ENCODE measurements at regions of chr17 and their contacts with region 1.

Region 1: GRCh38 chr17:56977673-56978395 is at the start of gene SCPEP1:
- DNase-seq: peak; percentile 100
- H3K4me3 ChIP-seq: peak within 1 kb of the TSS; percentile 70 to 75
- H3K27ac ChIP-seq: peak within 1 kb of the TSS in 1 of 2 experiments; percentile 70; a peak in 2 of 4 replicates
- H3K4me1 ChIP-seq: peaks cover 5 to 12% of the 10 kb centered on the region in 2 experiments; a peak in 3 of 4 replicates
- H3K27me3 ChIP-seq: no peaks in the 10 kb centered on the region
- CTCF ChIP-seq: no peak
- EP300 ChIP-seq: no peak
- RAD21 ChIP-seq: no peak
- polyA plus RNA-seq, gene SCPEP1: 99.6 and 124 TPM in 2 replicates

Region 2: GRCh38 chr17:56891784-56892183 is 86.0 kb before region 1 on chr17:
- CTCF ChIA-PET with region 1: no interaction called
- POLR2A ChIA-PET with region 1: no interaction called
- DNase-seq: peak; percentile 52
- H3K4me3 ChIP-seq: no peak overlapping the region
- H3K27ac ChIP-seq: no peak overlapping the region
- H3K4me1 ChIP-seq: peaks cover 0 to 3% of the 10 kb centered on the region in 2 experiments; a peak in 1 of 4 replicates
- H3K27me3 ChIP-seq: no peaks in the 10 kb centered on the region
- CTCF ChIP-seq: peak; percentile 53
- EP300 ChIP-seq: no peak
- RAD21 ChIP-seq: peak; percentile 6; the same call in 1 of the 2 replicates

Region 3: GRCh38 chr17:56960596-56961538 is 17.0 kb before region 1 on chr17 and contains the start of gene COIL:
- CTCF ChIA-PET with region 1: interaction called, 23 read pairs
- POLR2A ChIA-PET with region 1: interaction called, 13 read pairs
- DNase-seq: peak; percentile 97
- H3K4me3 ChIP-seq: peak within 1 kb of the TSS; percentile 60 to 98
- H3K27ac ChIP-seq: peak within 1 kb of the TSS; percentile 94 to 95
- H3K4me1 ChIP-seq: peaks cover 8 to 10% of the 10 kb centered on the region in 2 experiments; a peak in 2 of 4 replicates
- H3K27me3 ChIP-seq: no peaks in the 10 kb centered on the region
- CTCF ChIP-seq: peak; percentile 100
- EP300 ChIP-seq: peak in 1 of 2 experiments; percentile 53; a peak in 2 of 4 replicates
- RAD21 ChIP-seq: peak; percentile 75
- polyA plus RNA-seq, gene COIL: 3.9 and 5.7 TPM in 2 replicates

Region 4: DNA sequence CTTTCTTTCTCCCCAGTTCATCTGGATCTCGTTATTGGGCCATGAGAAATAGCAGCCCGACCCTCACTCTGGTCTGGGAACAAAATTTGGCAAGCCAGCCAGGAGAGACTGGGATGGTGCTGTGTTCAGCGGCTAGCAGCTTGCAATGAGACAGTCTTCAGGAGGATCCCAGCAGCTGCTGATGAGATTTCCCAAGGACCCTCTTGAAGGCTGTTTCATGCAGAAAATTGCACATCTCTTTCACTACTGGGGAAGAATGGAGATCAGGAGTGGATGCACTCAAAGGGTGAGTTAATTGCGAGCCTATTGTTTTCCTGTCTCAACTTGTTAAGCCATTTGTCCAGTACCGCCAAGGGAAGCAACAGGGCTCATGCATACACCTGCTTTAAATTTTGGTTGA is 11.5 kb before region 1 on chr17:
- CTCF ChIA-PET with region 1: interaction called, 23 read pairs
- POLR2A ChIA-PET with region 1: interaction called, 5 read pairs
- DNase-seq: no peak
- H3K4me3 ChIP-seq: no peak overlapping the region
- H3K27ac ChIP-seq: peak overlapping the region in 1 of 2 experiments; percentile 66; a peak in 2 of 4 replicates
- H3K4me1 ChIP-seq: peaks cover 0 to 10% of the 10 kb centered on the region in 2 experiments; a peak in 1 of 4 replicates
- H3K27me3 ChIP-seq: no peaks in the 10 kb centered on the region; the same call in 1 of the 2 replicates
- CTCF ChIP-seq: no peak
- EP300 ChIP-seq: peak in 1 of 2 experiments; percentile 49; a peak in 1 of 4 replicates
- RAD21 ChIP-seq: no peak

Region 5: GRCh38 chr17:57021226-57021940 is 43.5 kb after region 1 on chr17:
- CTCF ChIA-PET with region 1: no interaction called
- POLR2A ChIA-PET with region 1: no interaction called
- DNase-seq: no peak
- H3K4me3 ChIP-seq: no peak overlapping the region
- H3K27ac ChIP-seq: no peak overlapping the region
- H3K4me1 ChIP-seq: no peaks in the 10 kb centered on the region
- H3K27me3 ChIP-seq: no peaks in the 10 kb centered on the region
- CTCF ChIP-seq: no peak
- EP300 ChIP-seq: no peak
- RAD21 ChIP-seq: no peak

Measured in SK-N-SH (cell line).